ENCODE measurements at regions of chr9 and their contacts with region 1.

Region 1: GRCh38 chr9:2620919-2621679 is 488 bp upstream of the VLDLR start:
- DNase-seq: peak; percentile 85 to 89 (median 87)
- H3K4me3 ChIP-seq: peak overlapping the region; percentile 86
- H3K27ac ChIP-seq: peak overlapping the region; percentile 91 to 95
- H3K4me1 ChIP-seq: peaks cover 2% of the 10 kb centered on the region
- H3K27me3 ChIP-seq: no peaks in the 10 kb centered on the region
- CTCF ChIP-seq: peak in 2 of 3 donors; percentile 20 to 37
- EP300 ChIP-seq: no peak
- POLR2A ChIP-seq: peak; percentile 60

Region 2: GRCh38 chr9:2125906-2126305 is 495.2 kb before region 1 on chr9:
- intact Hi-C with region 1: loop called in 3 of 4 experiments (anchors 10 kb)
- DNase-seq: no peak
- H3K4me3 ChIP-seq: peak overlapping the region; percentile 3
- H3K27ac ChIP-seq: peak overlapping the region; percentile 36 to 91
- H3K4me1 ChIP-seq: peaks cover 29% of the 10 kb centered on the region
- H3K27me3 ChIP-seq: no peaks in the 10 kb centered on the region
- CTCF ChIP-seq: no peak
- EP300 ChIP-seq: no peak
- POLR2A ChIP-seq: no peak

Region 3: GRCh38 chr9:2158111-2158610 is 462.9 kb before region 1 on chr9:
- intact Hi-C with region 1: loop called in 1 of 4 experiments (anchors 5 kb)
- DNase-seq: peak; percentile 60 to 73 (median 66)
- H3K4me3 ChIP-seq: peak overlapping the region; percentile 36
- H3K27ac ChIP-seq: peak overlapping the region in 1 of 2 donors; percentile 85
- H3K4me1 ChIP-seq: peaks cover 2% of the 10 kb centered on the region
- H3K27me3 ChIP-seq: no peaks in the 10 kb centered on the region
- CTCF ChIP-seq: peak in 1 of 3 donors; percentile 17
- EP300 ChIP-seq: no peak
- POLR2A ChIP-seq: no peak

Region 4: DNA sequence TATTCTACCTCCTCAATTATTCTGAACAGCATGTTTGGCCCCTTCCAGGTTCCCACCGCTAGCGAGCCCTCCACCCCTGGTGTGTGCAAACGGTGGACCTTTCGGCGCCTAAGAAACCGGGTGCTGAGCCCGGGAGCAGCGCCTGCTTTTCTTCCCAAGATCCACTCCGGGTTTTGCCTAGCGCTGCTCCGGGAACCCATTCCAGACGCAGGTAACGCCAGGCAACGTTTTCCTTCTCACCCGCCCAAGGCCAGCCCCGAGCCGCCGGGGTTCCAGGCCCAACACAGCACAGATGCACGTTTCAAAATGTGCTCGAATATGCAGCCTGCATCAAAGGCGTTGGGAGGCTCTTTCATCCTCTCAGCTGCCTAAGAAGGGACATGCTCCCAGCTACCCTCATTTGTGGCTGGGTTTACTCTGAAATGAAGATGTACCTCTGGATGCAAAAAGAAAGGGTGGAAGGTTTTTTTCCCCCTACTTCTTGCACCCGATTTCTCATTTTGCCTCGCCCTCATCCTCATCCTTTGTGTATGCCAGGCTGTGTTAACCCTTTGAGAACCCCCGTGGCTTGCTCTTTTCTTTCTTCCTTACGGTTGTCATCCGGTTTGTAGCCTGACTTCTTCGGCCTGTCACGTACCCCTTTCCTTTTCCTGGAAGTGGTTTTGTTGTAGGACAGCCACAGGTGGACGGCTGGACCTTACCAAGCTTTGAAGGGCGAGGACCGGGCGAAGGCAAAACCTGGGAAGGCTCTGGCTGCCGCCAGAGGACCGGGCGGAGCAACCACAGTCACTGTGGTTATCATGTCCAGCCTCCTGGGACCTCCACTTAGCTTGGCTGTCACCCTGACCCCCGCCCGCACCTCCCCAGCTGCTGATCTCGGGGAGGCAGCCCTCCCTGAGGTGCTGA is 379.0 kb before region 1 on chr9:
- intact Hi-C with region 1: loop called in 2 of 4 experiments (anchors 10 kb)
- DNase-seq: peak; percentile 82 to 92 (median 89)
- H3K4me3 ChIP-seq: peak overlapping the region; percentile 47
- H3K27ac ChIP-seq: peak overlapping the region; percentile 11 to 78
- H3K4me1 ChIP-seq: peaks cover 6% of the 10 kb centered on the region
- H3K27me3 ChIP-seq: no peaks in the 10 kb centered on the region
- CTCF ChIP-seq: peak in 1 of 3 donors; percentile 35
- EP300 ChIP-seq: no peak
- POLR2A ChIP-seq: peak; percentile 73

Region 5: GRCh38 chr9:2427120-2427891 is 193.8 kb before region 1 on chr9:
- intact Hi-C with region 1: loop called in 1 of 4 experiments (anchors 10 kb)
- DNase-seq: no peak
- H3K4me3 ChIP-seq: no peak overlapping the region
- H3K27ac ChIP-seq: peak overlapping the region in 1 of 2 donors; percentile 87
- H3K4me1 ChIP-seq: peaks cover 9% of the 10 kb centered on the region
- H3K27me3 ChIP-seq: no peaks in the 10 kb centered on the region
- CTCF ChIP-seq: no peak
- EP300 ChIP-seq: no peak
- POLR2A ChIP-seq: no peak

Region 6: GRCh38 chr9:2727966-2728613 is 107.0 kb after region 1 on chr9:
- intact Hi-C with region 1: loop called in 1 of 4 experiments (anchors 5 kb)
- DNase-seq: peak in 4 of 5 donors; percentile 40 to 78 (median 48)
- H3K4me3 ChIP-seq: no peak overlapping the region
- H3K27ac ChIP-seq: peak overlapping the region in 1 of 2 donors; percentile 78
- H3K4me1 ChIP-seq: peaks cover 13% of the 10 kb centered on the region
- H3K27me3 ChIP-seq: no peaks in the 10 kb centered on the region
- CTCF ChIP-seq: peak; percentile 37 to 81 (median 79)
- EP300 ChIP-seq: no peak
- POLR2A ChIP-seq: no peak

Region 7: GRCh38 chr9:3006851-3007250 is 385.8 kb after region 1 on chr9:
- intact Hi-C with region 1: no loop called
- DNase-seq: no peak
- H3K4me3 ChIP-seq: no peak overlapping the region
- H3K27ac ChIP-seq: no peak overlapping the region
- H3K4me1 ChIP-seq: peaks cover 2% of the 10 kb centered on the region
- H3K27me3 ChIP-seq: no peaks in the 10 kb centered on the region
- CTCF ChIP-seq: no peak
- EP300 ChIP-seq: no peak
- POLR2A ChIP-seq: no peak